Activated CD4-positive, alpha-beta T cell treated with anti-CD3 and anti-CD28 coated beads for 36 hours (primary cell): ENCODE measurements at regions of chr4 and their contacts with region 1.

Region 1: GRCh38 chr4:77600521-77601451 is 4.8 kb upstream of the CXCL13 start:
- DNase-seq: peak; percentile 55
- ATAC-seq: peak; percentile 70
- H3K4me3 Mint-ChIP-seq: no peak overlapping the region
- H3K27ac Mint-ChIP-seq: no peak overlapping the region
- H3K4me1 Mint-ChIP-seq: peaks cover 32% of the 10 kb centered on the region
- H3K27me3 Mint-ChIP-seq: peaks cover 15% of the 10 kb centered on the region

Region 2: DNA sequence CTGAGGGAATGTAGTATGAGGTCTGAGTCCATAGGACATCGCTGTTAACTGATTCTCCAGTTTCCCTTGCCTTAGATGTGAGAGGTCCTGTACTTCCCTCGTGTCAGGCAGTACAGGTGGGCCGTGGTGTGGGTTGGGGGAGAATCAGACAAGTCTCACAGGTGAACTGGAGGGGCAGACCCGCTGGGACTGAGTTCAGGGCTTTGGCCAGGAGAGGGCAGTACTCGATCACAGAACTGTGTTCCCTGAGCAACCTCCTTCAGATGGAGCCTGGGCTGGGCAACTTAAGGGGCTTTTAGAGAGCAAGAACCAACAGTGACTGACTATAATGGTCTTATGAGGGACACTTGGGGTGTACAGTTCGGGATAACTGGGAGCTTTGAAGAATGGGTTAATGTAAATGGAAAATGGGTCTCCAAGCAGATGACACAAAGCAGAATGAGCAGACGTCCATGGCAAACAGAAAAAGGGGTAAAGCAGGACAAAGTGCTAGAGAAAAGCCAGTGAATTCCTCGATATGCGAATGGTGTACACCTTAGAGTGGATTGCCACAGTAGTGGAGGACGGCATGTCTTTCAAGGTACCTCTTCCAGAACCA is 360.2 kb before region 1 on chr4:
- CTCF ChIA-PET with region 1: no interaction called
- POLR2A ChIA-PET with region 1: no interaction called
- intact Hi-C with region 1: loop called in 1 of 2 experiments (anchors 10 kb)
- DNase-seq: peak; percentile 86
- ATAC-seq: peak; percentile 81
- H3K4me3 Mint-ChIP-seq: no peak overlapping the region
- H3K27ac Mint-ChIP-seq: no peak overlapping the region
- H3K4me1 Mint-ChIP-seq: no peaks in the 10 kb centered on the region
- H3K27me3 Mint-ChIP-seq: peaks cover 8% of the 10 kb centered on the region

Region 3: DNA sequence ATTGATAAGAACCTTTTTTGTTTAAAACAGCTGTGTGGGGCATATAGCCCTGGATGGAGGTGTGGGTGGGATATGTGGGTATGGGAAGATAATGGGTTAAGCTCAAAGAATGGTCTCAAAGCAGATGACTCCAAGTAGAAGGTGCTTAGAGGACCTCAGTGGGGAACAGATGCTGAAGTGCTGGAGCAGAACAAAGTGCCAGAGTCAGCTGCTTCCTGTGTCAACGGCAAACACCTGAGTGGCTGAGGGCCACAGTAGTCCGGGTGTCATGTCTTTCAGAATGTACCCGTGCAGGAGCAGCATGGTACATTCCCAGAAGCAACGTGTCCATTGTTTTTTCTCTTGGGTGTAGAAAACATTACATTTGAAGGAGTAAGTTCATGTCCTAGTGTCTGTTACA is 233.1 kb before region 1 on chr4:
- CTCF ChIA-PET with region 1: interaction called, 11 read pairs
- POLR2A ChIA-PET with region 1: no interaction called
- intact Hi-C with region 1: loop called in 1 of 2 experiments (anchors 5 kb)
- DNase-seq: no peak
- ATAC-seq: no peak
- H3K4me3 Mint-ChIP-seq: no peak overlapping the region
- H3K27ac Mint-ChIP-seq: no peak overlapping the region
- H3K4me1 Mint-ChIP-seq: no peaks in the 10 kb centered on the region
- H3K27me3 Mint-ChIP-seq: no peaks in the 10 kb centered on the region

Region 4: DNA sequence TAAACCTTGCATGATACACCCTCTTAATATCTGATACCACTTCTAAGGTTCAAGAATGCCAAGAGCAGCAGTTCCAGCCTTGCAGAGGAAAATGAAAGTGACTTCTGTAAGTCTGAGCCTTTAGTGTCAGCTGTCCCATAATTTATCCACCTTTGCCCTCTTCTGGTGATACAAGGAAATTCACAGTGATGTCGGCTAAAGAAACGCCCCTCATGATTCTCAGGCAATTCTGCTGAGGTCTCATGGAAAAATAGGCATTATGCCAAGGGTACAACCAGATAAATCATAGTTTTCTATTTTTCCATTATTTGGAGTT is 167.4 kb before region 1 on chr4:
- CTCF ChIA-PET with region 1: interaction called, 5 read pairs
- POLR2A ChIA-PET with region 1: interaction called, 4 read pairs
- intact Hi-C with region 1: loop called in 1 of 2 experiments (anchors 1 kb)
- DNase-seq: peak; percentile 13
- ATAC-seq: peak; percentile 89
- H3K4me3 Mint-ChIP-seq: no peak overlapping the region
- H3K27ac Mint-ChIP-seq: no peak overlapping the region
- H3K4me1 Mint-ChIP-seq: peaks cover 9% of the 10 kb centered on the region
- H3K27me3 Mint-ChIP-seq: no peaks in the 10 kb centered on the region

Region 5: GRCh38 chr4:77473509-77473908 is 127.3 kb before region 1 on chr4:
- CTCF ChIA-PET with region 1: interaction called, 103 read pairs
- POLR2A ChIA-PET with region 1: no interaction called
- intact Hi-C with region 1: no loop called
- DNase-seq: no peak
- ATAC-seq: peak; percentile 44
- H3K4me3 Mint-ChIP-seq: no peak overlapping the region
- H3K27ac Mint-ChIP-seq: no peak overlapping the region
- H3K4me1 Mint-ChIP-seq: peaks cover 2% of the 10 kb centered on the region
- H3K27me3 Mint-ChIP-seq: peaks cover 51% of the 10 kb centered on the region

Region 6: DNA sequence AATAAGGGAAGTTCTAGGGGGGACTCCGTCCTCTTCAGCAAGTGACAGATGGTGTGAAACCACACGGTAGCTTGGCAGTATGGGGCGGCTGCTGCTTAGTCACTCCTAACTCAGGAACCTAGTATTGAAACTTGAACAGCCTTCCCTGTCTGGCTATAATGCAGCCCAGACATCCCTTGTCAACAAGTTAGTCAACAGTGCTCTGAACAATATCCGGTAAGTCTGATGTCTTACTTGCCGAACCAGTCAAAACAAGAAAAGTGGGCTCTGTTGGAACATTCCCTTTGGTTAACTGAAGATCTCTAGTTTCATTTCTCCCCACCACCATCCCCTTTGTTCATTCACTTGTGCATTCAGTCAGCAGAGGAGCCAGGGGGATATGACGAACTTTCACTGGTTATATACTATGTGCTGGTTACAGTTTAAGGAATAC is 13.8 kb before region 1 on chr4:
- CTCF ChIA-PET with region 1: interaction called, 22 read pairs
- POLR2A ChIA-PET with region 1: interaction called, 3 read pairs
- intact Hi-C with region 1: loop called (anchors 1 kb)
- DNase-seq: peak; percentile 87
- ATAC-seq: peak; percentile 94
- H3K4me3 Mint-ChIP-seq: peak overlapping the region; percentile 54
- H3K27ac Mint-ChIP-seq: peak overlapping the region; percentile 84
- H3K4me1 Mint-ChIP-seq: peaks cover 66% of the 10 kb centered on the region
- H3K27me3 Mint-ChIP-seq: peaks cover 16% of the 10 kb centered on the region

Region 7: DNA sequence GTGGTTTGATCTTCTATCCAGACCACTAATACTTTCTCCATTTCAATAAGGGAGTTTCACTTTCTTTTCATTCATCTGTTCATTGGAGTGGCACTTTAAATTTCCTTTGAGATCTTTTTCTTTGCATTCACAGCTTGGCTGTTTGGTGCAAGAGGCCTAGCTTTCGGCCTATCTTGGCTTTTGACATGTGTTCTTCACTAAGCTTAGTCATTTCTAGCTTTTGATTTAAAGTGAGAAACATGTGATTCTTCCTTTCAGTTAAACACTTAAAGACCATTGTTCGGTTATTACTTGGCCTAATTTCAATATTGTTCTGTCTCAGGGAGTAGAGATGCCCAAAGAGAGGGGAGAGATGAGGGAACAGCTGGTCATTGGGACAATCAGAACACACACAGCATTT is 29.1 kb after region 1 on chr4:
- CTCF ChIA-PET with region 1: interaction called, 12 read pairs
- POLR2A ChIA-PET with region 1: no interaction called
- intact Hi-C with region 1: no loop called
- DNase-seq: peak; percentile 40
- ATAC-seq: peak; percentile 93
- H3K4me3 Mint-ChIP-seq: no peak overlapping the region
- H3K27ac Mint-ChIP-seq: peak overlapping the region; percentile 23
- H3K4me1 Mint-ChIP-seq: peaks cover 16% of the 10 kb centered on the region
- H3K27me3 Mint-ChIP-seq: peaks cover 2% of the 10 kb centered on the region